ENCODE measurements at regions of chr5 and their contacts with region 1.

Region 1: GRCh38 chr5:177113566-177114424 is 19.8 kb upstream of the NSD1 start:
- DNase-seq: peak; percentile 52 to 81
- H3K4me3 ChIP-seq: no peak overlapping the region
- H3K27ac ChIP-seq: no peak overlapping the region
- H3K4me1 ChIP-seq: no peaks in the 10 kb centered on the region
- H3K27me3 ChIP-seq: no peaks in the 10 kb centered on the region
- CTCF ChIP-seq: peak; percentile 98

Region 2: GRCh38 chr5:176660860-176661641 is 452.7 kb before region 1 on chr5:
- CTCF ChIA-PET with region 1: interaction called, 16 read pairs
- POLR2A ChIA-PET with region 1: interaction called, 5 read pairs
- intact Hi-C with region 1: loop called (anchors 1 kb)
- DNase-seq: peak; percentile 50 to 73
- H3K4me3 ChIP-seq: no peak overlapping the region
- H3K27ac ChIP-seq: no peak overlapping the region
- H3K4me1 ChIP-seq: no peaks in the 10 kb centered on the region
- H3K27me3 ChIP-seq: no peaks in the 10 kb centered on the region
- CTCF ChIP-seq: peak; percentile 95

Region 3: DNA sequence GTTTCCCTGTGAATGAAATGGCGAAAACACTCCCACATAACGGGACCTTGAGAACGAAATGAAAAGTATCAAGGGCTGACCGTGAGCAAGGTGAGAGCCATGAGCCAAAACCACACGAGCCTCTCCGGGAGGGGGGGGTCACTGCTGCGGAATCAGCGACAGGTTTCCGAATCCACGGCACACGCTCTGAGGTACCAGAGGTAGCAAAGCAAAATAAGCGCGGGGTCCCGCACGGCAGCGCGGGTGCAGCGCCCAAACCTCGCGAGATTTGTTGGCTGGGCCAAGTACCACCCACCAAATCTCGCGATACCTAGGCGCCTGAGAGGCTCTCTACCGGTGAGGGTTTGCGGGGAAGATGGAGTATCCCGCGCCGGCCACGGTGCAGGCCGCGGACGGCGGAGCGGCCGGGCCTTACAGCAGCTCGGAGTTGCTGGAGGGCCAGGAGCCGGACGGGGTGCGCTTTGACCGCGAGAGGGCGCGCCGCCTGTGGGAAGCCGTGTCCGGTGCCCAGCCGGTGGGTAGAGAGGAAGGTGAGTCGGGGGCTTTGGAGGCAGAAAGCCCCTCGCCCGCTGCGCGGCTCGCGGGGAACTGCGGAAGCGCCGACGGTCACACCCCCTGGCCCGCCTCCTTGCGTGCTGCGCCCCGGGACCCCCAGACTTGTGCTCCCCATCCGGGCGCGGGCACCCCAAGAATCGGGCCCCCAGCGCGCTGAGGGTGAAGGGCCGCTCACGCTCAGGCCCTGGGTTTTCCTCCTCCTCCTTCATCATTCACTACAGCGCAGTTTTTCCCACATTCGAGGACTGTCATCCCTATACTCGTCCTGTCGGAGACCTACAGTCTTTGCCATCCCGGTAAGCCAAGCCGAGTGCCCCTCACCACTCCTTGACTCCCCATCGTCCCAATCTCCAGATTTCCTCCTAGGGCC is 91.1 kb before region 1 on chr5 and contains the start of gene ZNF346:
- CTCF ChIA-PET with region 1: no interaction called
- POLR2A ChIA-PET with region 1: no interaction called
- intact Hi-C with region 1: no loop called
- DNase-seq: peak; percentile 82 to 89
- H3K4me3 ChIP-seq: peak within 1 kb of the TSS; percentile 98
- H3K27ac ChIP-seq: peak within 1 kb of the TSS; percentile 39
- H3K4me1 ChIP-seq: peaks cover 13% of the 10 kb centered on the region
- H3K27me3 ChIP-seq: no peaks in the 10 kb centered on the region
- CTCF ChIP-seq: peak; percentile 59
- total RNA-seq, gene ZNF346: 23.8 and 26.0 TPM in 2 replicates

Region 4: GRCh38 chr5:177071666-177072385 is 42.0 kb before region 1 on chr5:
- CTCF ChIA-PET with region 1: interaction called, 22 read pairs
- POLR2A ChIA-PET with region 1: no interaction called
- intact Hi-C with region 1: loop called (anchors 1 kb)
- DNase-seq: peak; percentile 67 to 75
- H3K4me3 ChIP-seq: no peak overlapping the region
- H3K27ac ChIP-seq: no peak overlapping the region
- H3K4me1 ChIP-seq: no peaks in the 10 kb centered on the region
- H3K27me3 ChIP-seq: no peaks in the 10 kb centered on the region
- CTCF ChIP-seq: peak; percentile 94

Region 5: GRCh38 chr5:177303121-177303924 is 189.5 kb after region 1 on chr5 and contains the starts of genes PRELID1 and RAB24:
- CTCF ChIA-PET with region 1: interaction called, 4 read pairs
- POLR2A ChIA-PET with region 1: no interaction called
- intact Hi-C with region 1: loop called (anchors 2 kb)
- DNase-seq: peak; percentile 61 to 91
- H3K4me3 ChIP-seq: peak within 1 kb of the TSS; percentile 100
- H3K27ac ChIP-seq: peak within 1 kb of the TSS; percentile 39
- H3K4me1 ChIP-seq: peaks cover 40% of the 10 kb centered on the region
- H3K27me3 ChIP-seq: no peaks in the 10 kb centered on the region
- CTCF ChIP-seq: no peak; the same call in 1 of the 2 replicates
- total RNA-seq, gene PRELID1: 189 and 209 TPM in 2 replicates
- total RNA-seq, gene RAB24: 16.9 and 25.2 TPM in 2 replicates

Region 6: GRCh38 chr5:177454397-177455035 is 340.7 kb after region 1 on chr5:
- CTCF ChIA-PET with region 1: no interaction called
- POLR2A ChIA-PET with region 1: no interaction called
- intact Hi-C with region 1: loop called (anchors 1 kb)
- DNase-seq: peak; percentile 71 to 96
- H3K4me3 ChIP-seq: peak overlapping the region; percentile 77
- H3K27ac ChIP-seq: 0 out of 2 replicates have a peak overlapping the region, but pooled peaks have one; percentile 26
- H3K4me1 ChIP-seq: 0 out of 2 replicates have a peak, but pooled peaks cover 5% of the 10 kb centered on the region
- H3K27me3 ChIP-seq: no peaks in the 10 kb centered on the region
- CTCF ChIP-seq: peak; percentile 82

Region 7: GRCh38 chr5:178058321-178059012 is 944.7 kb after region 1 on chr5:
- CTCF ChIA-PET with region 1: no interaction called
- POLR2A ChIA-PET with region 1: no interaction called
- intact Hi-C with region 1: loop called (anchors 1 kb)
- DNase-seq: no peak
- H3K4me3 ChIP-seq: no peak overlapping the region
- H3K27ac ChIP-seq: no peak overlapping the region
- H3K4me1 ChIP-seq: no peaks in the 10 kb centered on the region
- H3K27me3 ChIP-seq: peaks cover 67% of the 10 kb centered on the region
- CTCF ChIP-seq: no peak